ENCODE measurements at regions of chr7 and their contacts with region 1.

Region 1: GRCh38 chr7:18393465-18394118 is 102.0 kb upstream of the HDAC9 start:
- DNase-seq: no peak
- ATAC-seq: no peak
- H3K4me3 ChIP-seq: no peak overlapping the region
- H3K27ac ChIP-seq: no peak overlapping the region
- H3K4me1 ChIP-seq: no peaks in the 10 kb centered on the region
- H3K27me3 ChIP-seq: no peaks in the 10 kb centered on the region
- CTCF ChIP-seq: no peak

Region 2: GRCh38 chr7:18481776-18482175 is 88.2 kb after region 1 on chr7:
- CTCF ChIA-PET with region 1: no interaction called
- POLR2A ChIA-PET with region 1: no interaction called
- in situ Hi-C with region 1: no loop called
- intact Hi-C with region 1: no loop called
- DNase-seq: no peak
- ATAC-seq: no peak
- H3K4me3 ChIP-seq: no peak overlapping the region
- H3K27ac ChIP-seq: peak overlapping the region; percentile 20; the same call in 1 of the 2 replicates
- H3K4me1 ChIP-seq: no peaks in the 10 kb centered on the region
- H3K27me3 ChIP-seq: no peaks in the 10 kb centered on the region
- CTCF ChIP-seq: no peak

Region 3: DNA sequence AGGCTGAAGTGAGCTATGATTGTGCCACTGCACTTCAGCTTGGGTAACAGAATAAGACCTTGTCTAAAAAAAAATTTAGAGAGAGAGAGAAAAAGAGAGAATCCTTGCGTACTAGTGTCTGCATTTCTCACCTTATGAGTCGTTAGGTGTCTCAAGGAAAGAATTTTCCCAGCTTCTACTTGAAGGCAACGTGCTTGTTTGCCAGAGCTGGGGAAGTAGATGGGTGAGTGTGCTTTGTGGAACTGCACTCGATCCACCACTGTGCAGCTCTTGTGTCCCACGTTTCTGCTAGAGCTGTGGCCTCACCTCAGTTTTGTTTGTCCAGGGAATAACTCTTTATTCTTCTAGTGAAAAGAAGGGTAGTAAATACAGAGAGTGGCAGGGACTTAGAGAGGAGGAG is 140.9 kb after region 1 on chr7:
- CTCF ChIA-PET with region 1: no interaction called
- POLR2A ChIA-PET with region 1: interaction called, 10 read pairs
- in situ Hi-C with region 1: no loop called
- intact Hi-C with region 1: no loop called
- DNase-seq: no peak
- ATAC-seq: peak; percentile 63
- H3K4me3 ChIP-seq: peak overlapping the region in 1 of 2 experiments; percentile 9; a peak in 1 of 4 replicates
- H3K27ac ChIP-seq: peak overlapping the region; percentile 64; the same call in 1 of the 2 replicates
- H3K4me1 ChIP-seq: peaks cover 11% of the 10 kb centered on the region
- H3K27me3 ChIP-seq: no peaks in the 10 kb centered on the region
- CTCF ChIP-seq: no peak